Activated T-helper 1 cell treated with anti-CD3 and anti-CD28 coated beads, Interleukin-12 subunit alpha, Interleukin-12 subunit beta, Interleukin-2, Interleukin-4 antibody, amounts not matched to agents 30 ng/mL and 10 ng/mL and 1 ng/mL, durations not matched to agents 14 hours and 24 hours and 36 hours (primary cell): ENCODE measurements at regions of chrX and their contacts with region 1.

Region 1: GRCh38 chrX:14029425-14030173 is at the start of gene GEMIN8:
- DNase-seq: peak; percentile 81
- H3K4me3 Mint-ChIP-seq: peak within 1 kb of the TSS; percentile 99
- H3K27ac Mint-ChIP-seq: peak within 1 kb of the TSS; percentile 100
- H3K4me1 Mint-ChIP-seq: peaks cover 37% of the 10 kb centered on the region
- H3K27me3 Mint-ChIP-seq: no peaks in the 10 kb centered on the region
- total RNA-seq, gene GEMIN8: 15.6 and 17.7 TPM in 2 replicates

Region 2: DNA sequence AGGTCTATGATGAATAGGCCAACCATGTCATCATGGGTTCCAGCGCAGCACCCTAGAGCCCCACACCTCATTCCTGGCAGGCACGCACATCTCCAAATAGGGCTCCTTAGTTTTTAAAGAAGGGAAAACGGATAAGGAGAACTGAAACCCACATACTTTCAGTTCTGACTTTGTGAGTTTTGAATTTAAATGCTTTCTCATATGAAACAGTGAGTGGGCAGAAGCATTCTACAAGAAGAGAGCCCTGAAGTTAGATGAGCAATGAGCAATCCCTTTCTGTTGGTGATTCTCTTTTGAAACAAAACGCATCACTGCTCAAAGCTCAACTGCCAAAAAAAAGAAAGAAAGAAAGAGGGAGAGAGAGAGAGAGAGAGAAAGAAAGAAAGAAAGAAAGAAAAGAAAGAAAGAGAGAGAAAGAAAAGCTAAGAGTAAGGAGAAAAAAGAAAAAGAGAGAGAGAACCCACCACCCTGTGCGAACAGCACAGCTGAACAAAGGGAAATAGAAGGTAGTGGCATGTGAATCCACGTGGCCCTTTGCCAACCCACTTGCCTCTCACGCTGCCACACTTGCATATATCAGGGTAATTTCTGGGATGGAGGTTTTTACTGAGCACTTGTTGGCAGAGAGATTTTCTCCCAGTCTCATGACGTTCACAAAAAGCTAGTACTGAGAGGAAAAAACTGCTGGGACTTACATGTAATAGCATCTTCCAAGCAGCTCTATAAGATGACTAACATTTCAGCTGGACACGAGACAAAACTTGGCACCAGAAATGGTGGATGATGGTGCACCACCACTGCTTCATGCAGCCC is 1023.7 kb before region 1 on chrX:
- intact Hi-C with region 1: loop called (anchors 10 kb)
- DNase-seq: no peak
- H3K4me3 Mint-ChIP-seq: peak overlapping the region; percentile 86
- H3K27ac Mint-ChIP-seq: peak overlapping the region; percentile 100
- H3K4me1 Mint-ChIP-seq: peaks cover 62% of the 10 kb centered on the region
- H3K27me3 Mint-ChIP-seq: no peaks in the 10 kb centered on the region

Region 3: GRCh38 chrX:13653022-13653693 is 376.4 kb before region 1 on chrX and contains the start of gene TCEANC:
- intact Hi-C with region 1: loop called (anchors 1 kb)
- DNase-seq: peak; percentile 91
- H3K4me3 Mint-ChIP-seq: peak within 1 kb of the TSS; percentile 88
- H3K27ac Mint-ChIP-seq: peak within 1 kb of the TSS; percentile 92
- H3K4me1 Mint-ChIP-seq: peaks cover 20% of the 10 kb centered on the region
- H3K27me3 Mint-ChIP-seq: no peaks in the 10 kb centered on the region
- total RNA-seq, gene TCEANC: 3.9 and 5.0 TPM in 2 replicates

Region 4: DNA sequence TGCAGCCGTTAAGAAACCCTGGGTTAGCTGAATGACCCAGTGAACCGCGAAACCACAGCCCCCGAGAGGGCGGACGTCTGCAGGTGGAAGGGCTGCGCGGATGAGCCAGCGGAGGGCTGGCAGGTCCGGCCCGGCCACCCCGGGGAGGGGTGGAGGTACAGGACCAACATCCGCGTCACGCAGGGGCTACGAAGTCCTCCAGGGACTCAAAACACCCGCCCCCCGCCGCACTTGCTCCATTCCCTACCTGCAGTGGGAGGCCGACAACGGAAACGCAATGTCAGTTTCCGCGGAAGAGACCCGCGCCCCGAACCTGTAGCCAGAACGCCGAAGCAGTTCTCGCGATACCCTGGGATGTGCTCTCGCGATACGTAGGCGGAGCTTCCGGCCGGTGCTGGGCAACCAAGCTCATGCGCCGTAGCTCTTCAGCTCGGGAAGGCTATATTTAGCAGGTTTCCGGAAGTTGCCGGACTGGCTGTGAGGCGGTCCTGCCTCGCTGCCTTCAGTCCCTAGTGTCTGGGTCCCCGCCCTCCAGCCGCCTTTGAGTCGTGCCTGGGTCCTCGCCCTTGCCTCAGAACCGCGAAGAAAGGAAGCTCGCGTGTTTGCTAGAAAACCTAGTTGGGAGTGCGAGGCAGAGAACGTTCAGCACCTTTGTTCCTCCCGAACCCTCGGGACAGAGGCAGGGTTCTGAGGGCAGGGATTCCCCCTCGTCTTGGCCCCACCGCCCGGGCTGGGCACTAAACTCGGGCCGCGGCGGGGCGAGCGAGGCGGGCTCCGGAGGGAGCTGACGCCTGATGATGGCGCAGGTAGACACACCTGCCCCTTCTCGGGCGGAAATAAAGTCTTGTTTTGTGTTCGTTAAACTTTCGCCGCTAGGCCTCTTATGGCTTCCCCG is 295.1 kb before region 1 on chrX and contains the starts of genes OFD1 and TRAPPC2:
- intact Hi-C with region 1: loop called (anchors 1 kb)
- DNase-seq: peak; percentile 88
- H3K4me3 Mint-ChIP-seq: peak within 1 kb of the TSS; percentile 97
- H3K27ac Mint-ChIP-seq: peak within 1 kb of the TSS; percentile 98
- H3K4me1 Mint-ChIP-seq: peaks cover 49% of the 10 kb centered on the region
- H3K27me3 Mint-ChIP-seq: peaks cover 2% of the 10 kb centered on the region
- total RNA-seq, gene OFD1: 21.9 and 22.0 TPM in 2 replicates
- total RNA-seq, gene TRAPPC2: 16.4 and 16.5 TPM in 2 replicates

Region 5: GRCh38 chrX:14872851-14873675 is 843.5 kb after region 1 on chrX and contains the starts of genes FANCB and MOSPD2:
- intact Hi-C with region 1: loop called (anchors 5 kb)
- DNase-seq: peak; percentile 93
- H3K4me3 Mint-ChIP-seq: peak within 1 kb of the TSS; percentile 84
- H3K27ac Mint-ChIP-seq: peak within 1 kb of the TSS; percentile 81
- H3K4me1 Mint-ChIP-seq: peaks cover 17% of the 10 kb centered on the region
- H3K27me3 Mint-ChIP-seq: no peaks in the 10 kb centered on the region
- total RNA-seq, gene FANCB: 17.0 and 18.8 TPM in 2 replicates
- total RNA-seq, gene MOSPD2: 14.3 and 15.1 TPM in 2 replicates

Region 6: DNA sequence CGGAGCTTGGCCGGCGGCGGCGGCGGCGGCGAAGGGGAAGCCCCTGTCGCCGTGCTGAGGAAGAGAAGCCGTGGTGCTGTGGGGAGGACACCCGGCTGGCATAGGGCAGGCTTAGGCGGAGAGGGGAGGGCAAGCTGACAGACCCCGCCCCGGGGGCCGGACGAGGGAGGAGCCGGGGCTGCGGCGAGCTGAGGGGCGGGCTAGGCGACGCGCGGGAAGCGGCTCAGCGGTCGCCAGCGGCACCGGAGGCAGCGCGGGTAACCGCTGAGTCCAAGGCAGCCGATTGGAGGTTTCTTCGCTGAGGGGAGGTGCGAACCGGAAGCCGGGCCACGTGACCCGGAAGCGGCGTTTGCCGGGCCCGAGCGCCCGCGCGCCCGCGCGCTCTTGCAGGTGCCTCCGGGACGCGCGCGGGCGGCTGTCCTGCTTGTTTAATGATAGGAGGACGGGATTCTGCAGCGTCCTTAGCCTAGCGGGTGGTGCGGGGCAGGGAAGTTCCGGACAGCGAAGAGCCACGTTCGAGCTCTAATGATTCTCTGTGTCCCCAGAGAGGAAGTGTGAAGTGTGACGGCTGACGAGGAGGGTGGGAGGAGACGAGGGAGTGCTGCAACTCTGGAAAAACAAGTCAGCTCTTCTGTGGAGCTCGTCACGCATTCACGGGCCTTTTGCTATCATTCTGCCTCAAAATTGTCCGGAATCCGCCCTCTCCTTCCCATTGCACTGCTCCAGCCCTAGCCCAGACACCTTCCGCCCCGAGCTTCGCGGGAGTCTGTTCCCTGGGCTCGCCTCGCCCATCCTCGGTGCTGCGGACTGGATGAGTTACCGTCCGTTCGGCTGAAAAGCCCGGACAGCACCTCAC is 1825.3 kb after region 1 on chrX and contains the start of gene AP1S2:
- intact Hi-C with region 1: loop called (anchors 5 kb)
- DNase-seq: peak; percentile 89
- H3K4me3 Mint-ChIP-seq: peak within 1 kb of the TSS; percentile 88
- H3K27ac Mint-ChIP-seq: peak within 1 kb of the TSS; percentile 90
- H3K4me1 Mint-ChIP-seq: peaks cover 10% of the 10 kb centered on the region
- H3K27me3 Mint-ChIP-seq: no peaks in the 10 kb centered on the region
- total RNA-seq, gene AP1S2: 20.7 and 35.3 TPM in 2 replicates